Activated CD4-positive, alpha-beta T cell treated with anti-CD3 and anti-CD28 coated beads, Interleukin-2, amount 10 ng/mL, durations not matched to agents 24 days and 14 days (primary cell): ENCODE measurements at regions of chr7 and their contacts with region 1.

Region 1: DNA sequence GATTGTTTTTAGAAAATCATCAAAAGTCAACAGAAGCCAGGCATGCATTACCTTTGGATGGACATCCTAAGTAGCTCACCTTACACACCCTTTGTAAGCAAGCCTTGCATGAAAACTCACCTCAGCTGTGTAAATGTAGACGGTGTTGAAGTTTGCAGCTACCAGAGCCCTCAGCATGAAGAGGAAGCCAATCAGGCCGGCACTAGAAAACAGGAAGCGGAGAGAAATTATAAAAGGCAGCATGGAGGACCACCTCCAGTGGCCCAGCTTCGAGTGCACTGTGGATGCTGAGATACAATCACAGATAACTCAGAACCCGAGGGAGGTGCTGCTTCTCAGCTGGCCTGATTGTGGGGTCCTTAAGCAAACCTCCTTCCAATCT is 75.3 kb downstream of the SVOPL start:
- DNase-seq: peak; percentile 70
- H3K4me3 Mint-ChIP-seq: peak overlapping the region; percentile 42
- H3K27ac Mint-ChIP-seq: peak overlapping the region; percentile 27
- H3K4me1 Mint-ChIP-seq: peaks cover 31% of the 10 kb centered on the region
- H3K27me3 Mint-ChIP-seq: peaks cover 2% of the 10 kb centered on the region

Region 2: GRCh38 chr7:138666385-138666784 is 40.5 kb after region 1 on chr7:
- intact Hi-C with region 1: loop called (anchors 5 kb)
- DNase-seq: no peak
- H3K4me3 Mint-ChIP-seq: no peak overlapping the region
- H3K27ac Mint-ChIP-seq: no peak overlapping the region
- H3K4me1 Mint-ChIP-seq: peaks cover 17% of the 10 kb centered on the region
- H3K27me3 Mint-ChIP-seq: peaks cover 36% of the 10 kb centered on the region